ENCODE measurements at regions of chr5 and their contacts with region 1.

Region 1: DNA sequence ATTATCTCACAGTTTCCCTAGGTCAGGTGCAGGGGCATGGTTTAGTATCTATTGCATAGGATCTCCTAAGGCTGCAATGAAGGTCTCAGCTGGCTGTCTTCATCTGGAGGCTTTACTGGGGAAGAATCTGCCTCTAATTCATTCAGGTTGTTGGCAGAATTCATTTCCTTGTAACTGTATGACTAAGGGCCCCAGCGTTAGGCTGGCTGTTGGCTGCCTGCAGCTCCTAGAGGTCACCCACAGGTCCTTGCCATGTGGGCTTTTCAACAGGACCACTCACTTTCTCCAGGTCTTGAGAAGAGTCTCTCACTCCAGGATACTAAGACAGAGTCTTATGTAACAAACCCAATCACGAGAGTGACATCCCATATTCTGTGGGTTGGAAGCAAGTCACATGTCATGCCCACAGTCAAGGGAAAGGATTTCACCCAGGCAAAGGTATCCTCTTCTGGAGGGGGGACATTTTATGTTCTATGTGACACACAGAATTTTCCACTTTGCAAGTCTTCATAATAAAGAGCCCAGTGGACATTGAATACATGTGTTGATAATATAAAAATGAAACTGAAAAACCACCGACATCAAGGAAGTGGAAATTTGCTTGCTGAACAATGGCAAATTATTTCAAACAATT is 38.2 kb downstream of the HMHB1 start:
- DNase-seq: no peak
- H3K4me3 ChIP-seq: no peak overlapping the region
- H3K27ac ChIP-seq: no peak overlapping the region
- H3K4me1 ChIP-seq: no peaks in the 10 kb centered on the region
- H3K27me3 ChIP-seq: no peaks in the 10 kb centered on the region
- CTCF ChIP-seq: no peak

Region 2: DNA sequence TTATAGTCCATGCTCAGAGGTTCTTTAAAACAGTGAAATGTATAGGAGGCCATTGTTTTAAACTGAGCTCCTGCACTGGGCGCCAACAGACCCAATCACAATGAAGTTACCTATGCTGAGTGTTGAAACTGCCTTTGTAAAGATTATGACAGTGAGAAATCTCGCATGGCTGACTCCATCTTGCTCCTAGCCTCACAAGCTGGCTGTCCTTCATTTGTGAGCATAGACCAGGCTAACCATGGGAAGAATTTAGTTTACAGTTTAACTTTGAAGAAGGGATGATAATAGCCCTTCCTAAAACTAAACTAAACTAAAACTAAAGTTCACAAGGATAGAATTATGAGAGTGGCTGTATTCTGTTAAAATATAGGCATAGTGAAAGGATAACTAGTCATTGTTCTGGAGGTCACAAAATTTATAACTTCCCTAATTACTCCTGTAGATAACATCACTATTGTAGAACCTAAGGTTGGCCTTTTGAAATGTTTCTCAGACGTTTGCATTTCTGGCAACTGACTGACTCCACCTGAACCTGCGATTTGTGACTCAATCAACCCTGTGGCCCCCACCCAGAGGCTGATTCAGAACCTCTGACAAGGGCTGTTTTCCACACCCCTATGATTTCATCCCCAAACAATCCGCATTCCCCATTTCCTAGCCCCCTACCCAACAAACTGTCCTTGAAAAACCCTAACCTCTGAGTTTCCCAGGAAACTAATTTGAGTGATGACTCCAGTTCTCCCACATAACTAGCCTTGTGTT is 20.9 kb after region 1 on chr5:
- CTCF ChIA-PET with region 1: no interaction called
- dilution Hi-C with region 1: no loop called
- in situ Hi-C with region 1: no loop called
- intact Hi-C with region 1: loop called (anchors 1 kb)
- DNase-seq: peak; percentile 67
- H3K4me3 ChIP-seq: no peak overlapping the region
- H3K27ac ChIP-seq: no peak overlapping the region
- H3K4me1 ChIP-seq: peaks cover 8% of the 10 kb centered on the region
- H3K27me3 ChIP-seq: no peaks in the 10 kb centered on the region
- CTCF ChIP-seq: no peak

Region 3: DNA sequence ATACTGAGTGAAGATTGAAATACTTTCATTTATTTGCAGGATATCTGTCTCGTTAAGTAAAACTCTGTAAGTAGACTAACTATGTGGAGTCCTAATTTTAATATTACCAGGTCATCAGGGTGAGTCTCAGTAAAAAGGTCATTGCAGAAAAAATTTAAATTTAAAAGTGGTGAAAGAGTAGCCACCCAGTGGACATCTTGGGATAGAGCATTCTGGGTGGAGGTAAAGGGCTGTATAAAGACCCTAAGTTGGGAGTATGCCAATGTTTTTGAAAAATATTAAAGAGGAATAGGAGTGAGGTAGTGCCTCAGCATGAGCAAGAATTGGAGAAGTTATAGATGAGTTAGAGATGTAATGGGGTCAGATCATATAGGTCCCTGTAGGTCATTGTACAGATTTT is 107.3 kb after region 1 on chr5:
- CTCF ChIA-PET with region 1: no interaction called
- dilution Hi-C with region 1: no loop called
- in situ Hi-C with region 1: no loop called
- intact Hi-C with region 1: no loop called
- DNase-seq: no peak
- H3K4me3 ChIP-seq: no peak overlapping the region
- H3K27ac ChIP-seq: no peak overlapping the region
- H3K4me1 ChIP-seq: no peaks in the 10 kb centered on the region
- H3K27me3 ChIP-seq: no peaks in the 10 kb centered on the region
- CTCF ChIP-seq: peak; percentile 34 to 43